Activated T-helper 1 cell treated with anti-CD3 and anti-CD28 coated beads, Interleukin-12 subunit alpha, Interleukin-12 subunit beta, Interleukin-2, Interleukin-4 antibody, amounts not matched to agents 30 ng/mL and 10 ng/mL and 1 ng/mL, durations not matched to agents 14 hours and 24 hours and 36 hours (primary cell): ENCODE measurements at regions of chr3 and their contacts with region 1.

Region 1: DNA sequence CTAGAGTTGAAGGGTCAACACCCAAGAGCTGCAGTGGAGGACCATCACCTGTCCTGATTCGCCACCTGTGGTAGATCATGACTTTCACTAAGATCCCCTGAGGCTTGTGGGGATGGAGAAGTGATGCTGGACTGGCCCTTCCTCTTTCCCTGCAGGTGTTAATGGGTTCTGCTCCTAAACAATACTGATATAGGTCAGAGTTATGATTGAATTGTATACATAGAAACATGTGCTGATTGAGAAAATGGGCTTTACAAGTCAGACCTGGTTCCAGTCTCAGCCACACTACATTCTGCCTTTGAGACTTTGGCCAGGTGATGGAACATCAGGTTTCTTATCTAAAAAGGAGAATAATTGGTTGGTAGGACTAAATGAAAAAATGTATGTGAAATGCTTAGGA is 418.9 kb upstream of the TPRG1 start:
- DNase-seq: no peak
- H3K4me3 Mint-ChIP-seq: no peak overlapping the region
- H3K27ac Mint-ChIP-seq: peak overlapping the region; percentile 60
- H3K4me1 Mint-ChIP-seq: peaks cover 33% of the 10 kb centered on the region
- H3K27me3 Mint-ChIP-seq: peaks cover 2% of the 10 kb centered on the region

Region 2: DNA sequence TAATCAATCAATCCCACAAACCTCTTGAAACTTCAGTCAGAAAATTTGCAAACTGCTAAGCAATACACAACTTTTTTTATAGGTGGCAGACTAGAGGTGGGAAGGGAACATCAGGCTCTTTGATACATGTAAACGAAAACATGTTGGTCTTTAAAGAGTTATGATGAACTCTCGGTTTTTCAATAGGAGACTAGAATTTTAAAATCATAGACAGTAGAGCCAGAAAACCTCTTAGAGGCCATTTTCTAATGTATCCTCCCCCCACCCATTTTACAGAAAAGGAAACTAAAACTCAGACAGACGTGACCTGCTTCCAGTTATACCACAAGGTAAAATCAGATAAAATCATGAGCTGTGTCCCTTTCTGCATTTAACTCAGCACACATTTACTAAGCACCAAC is 778.0 kb before region 1 on chr3:
- intact Hi-C with region 1: loop called (anchors 5 kb)
- DNase-seq: no peak
- H3K4me3 Mint-ChIP-seq: peak overlapping the region; percentile 59
- H3K27ac Mint-ChIP-seq: peak overlapping the region; percentile 94
- H3K4me1 Mint-ChIP-seq: peaks cover 62% of the 10 kb centered on the region
- H3K27me3 Mint-ChIP-seq: peaks cover 2% of the 10 kb centered on the region

Region 3: DNA sequence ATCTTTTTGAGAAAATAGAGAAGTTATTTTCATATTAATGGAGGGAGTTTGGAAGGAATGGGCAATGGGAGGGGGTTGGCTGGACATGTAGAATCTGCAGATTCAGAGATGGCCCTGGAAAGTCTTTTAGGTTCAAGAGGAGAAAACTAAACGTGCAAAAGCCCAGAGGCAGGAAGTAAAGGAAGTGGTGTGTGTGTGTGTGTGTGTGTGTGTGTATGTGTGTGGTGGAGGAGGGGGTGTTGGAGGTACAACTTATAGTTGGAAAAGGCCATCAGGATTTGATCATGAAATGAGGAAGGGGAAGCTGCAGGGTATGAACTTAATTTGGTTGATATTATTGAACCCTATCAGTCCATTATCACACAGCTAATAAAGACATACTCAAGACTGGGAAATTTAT is 604.5 kb before region 1 on chr3:
- intact Hi-C with region 1: no loop called
- DNase-seq: no peak
- H3K4me3 Mint-ChIP-seq: no peak overlapping the region
- H3K27ac Mint-ChIP-seq: peak overlapping the region; percentile 32
- H3K4me1 Mint-ChIP-seq: peaks cover 42% of the 10 kb centered on the region
- H3K27me3 Mint-ChIP-seq: no peaks in the 10 kb centered on the region

Region 4: DNA sequence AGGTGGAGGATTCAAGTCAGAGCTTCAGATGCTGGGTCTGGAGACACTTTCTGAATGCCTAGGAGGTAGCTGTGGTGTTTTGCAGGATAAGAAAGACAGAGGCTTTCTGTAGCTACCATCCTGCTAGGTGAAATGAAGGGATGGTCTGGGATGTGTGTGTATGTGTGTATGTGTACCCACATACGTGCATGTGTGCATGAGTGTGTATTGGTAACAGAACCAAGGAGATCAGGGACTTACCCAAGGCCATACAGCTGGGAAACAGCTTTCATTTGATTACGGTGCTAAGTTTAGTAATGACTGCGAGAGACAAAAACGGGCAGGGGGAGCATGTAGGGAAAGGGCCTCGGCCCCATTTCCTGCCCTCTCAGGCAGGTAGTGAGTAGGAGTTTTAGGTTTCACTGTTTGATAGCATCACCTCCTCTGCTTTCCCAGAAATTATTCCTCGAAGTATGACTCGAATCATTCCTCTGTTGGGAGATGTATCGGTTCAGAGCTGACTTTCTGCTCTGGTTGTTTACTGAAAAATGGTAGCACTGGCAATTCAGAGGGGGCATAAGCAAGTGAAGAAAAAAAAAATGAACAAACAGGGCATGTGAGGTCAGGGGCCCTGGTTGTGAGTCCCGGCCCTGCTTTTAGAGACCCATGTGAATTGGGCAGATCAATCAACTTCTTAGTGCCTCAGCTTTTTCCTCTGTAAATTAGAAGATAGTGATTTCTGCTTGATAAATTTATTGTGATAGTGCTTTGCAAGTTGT is 468.2 kb before region 1 on chr3:
- intact Hi-C with region 1: loop called (anchors 1 kb)
- DNase-seq: peak; percentile 26
- H3K4me3 Mint-ChIP-seq: peak overlapping the region; percentile 57
- H3K27ac Mint-ChIP-seq: peak overlapping the region; percentile 90
- H3K4me1 Mint-ChIP-seq: peaks cover 55% of the 10 kb centered on the region
- H3K27me3 Mint-ChIP-seq: peaks cover 2% of the 10 kb centered on the region

Region 5: GRCh38 chr3:188389711-188390342 is 363.0 kb before region 1 on chr3:
- intact Hi-C with region 1: loop called (anchors 2 kb)
- DNase-seq: peak; percentile 33
- H3K4me3 Mint-ChIP-seq: peak overlapping the region; percentile 25
- H3K27ac Mint-ChIP-seq: peak overlapping the region; percentile 86
- H3K4me1 Mint-ChIP-seq: peaks cover 44% of the 10 kb centered on the region
- H3K27me3 Mint-ChIP-seq: peaks cover 1% of the 10 kb centered on the region

Region 6: GRCh38 chr3:188720636-188721035 is 32.2 kb before region 1 on chr3:
- intact Hi-C with region 1: loop called (anchors 1 kb)
- DNase-seq: no peak
- H3K4me3 Mint-ChIP-seq: no peak overlapping the region
- H3K27ac Mint-ChIP-seq: no peak overlapping the region
- H3K4me1 Mint-ChIP-seq: peaks cover 35% of the 10 kb centered on the region
- H3K27me3 Mint-ChIP-seq: peaks cover 2% of the 10 kb centered on the region

Region 7: GRCh38 chr3:188947401-188948280 is 194.8 kb after region 1 on chr3:
- intact Hi-C with region 1: loop called (anchors 1 kb)
- DNase-seq: no peak
- H3K4me3 Mint-ChIP-seq: no peak overlapping the region
- H3K27ac Mint-ChIP-seq: no peak overlapping the region
- H3K4me1 Mint-ChIP-seq: peaks cover 31% of the 10 kb centered on the region
- H3K27me3 Mint-ChIP-seq: peaks cover 4% of the 10 kb centered on the region

Region 8: DNA sequence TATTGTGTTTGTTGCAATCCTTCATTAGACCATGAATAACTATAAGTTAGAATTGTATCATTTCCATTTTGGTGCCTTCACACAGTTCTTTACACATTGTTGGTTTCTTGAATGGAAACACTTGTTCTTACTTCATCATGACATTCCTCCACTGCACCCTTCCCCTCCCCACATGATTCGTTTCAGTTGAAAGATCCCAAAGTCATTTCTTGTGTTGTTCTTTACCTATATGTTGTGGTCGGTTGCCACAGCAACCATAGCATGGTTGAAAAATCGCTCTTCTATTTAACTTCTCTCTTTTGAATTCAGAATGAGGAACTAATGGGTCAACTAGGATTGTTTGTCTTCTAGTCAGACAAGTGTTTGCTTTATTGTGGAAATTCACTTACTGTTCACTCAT is 1864.3 kb after region 1 on chr3:
- intact Hi-C with region 1: loop called (anchors 5 kb)
- DNase-seq: peak; percentile 58
- H3K4me3 Mint-ChIP-seq: peak overlapping the region; percentile 61
- H3K27ac Mint-ChIP-seq: peak overlapping the region; percentile 97
- H3K4me1 Mint-ChIP-seq: peaks cover 91% of the 10 kb centered on the region
- H3K27me3 Mint-ChIP-seq: no peaks in the 10 kb centered on the region